ENCODE measurements at regions of chr6 and their contacts with region 1.

Region 1: DNA sequence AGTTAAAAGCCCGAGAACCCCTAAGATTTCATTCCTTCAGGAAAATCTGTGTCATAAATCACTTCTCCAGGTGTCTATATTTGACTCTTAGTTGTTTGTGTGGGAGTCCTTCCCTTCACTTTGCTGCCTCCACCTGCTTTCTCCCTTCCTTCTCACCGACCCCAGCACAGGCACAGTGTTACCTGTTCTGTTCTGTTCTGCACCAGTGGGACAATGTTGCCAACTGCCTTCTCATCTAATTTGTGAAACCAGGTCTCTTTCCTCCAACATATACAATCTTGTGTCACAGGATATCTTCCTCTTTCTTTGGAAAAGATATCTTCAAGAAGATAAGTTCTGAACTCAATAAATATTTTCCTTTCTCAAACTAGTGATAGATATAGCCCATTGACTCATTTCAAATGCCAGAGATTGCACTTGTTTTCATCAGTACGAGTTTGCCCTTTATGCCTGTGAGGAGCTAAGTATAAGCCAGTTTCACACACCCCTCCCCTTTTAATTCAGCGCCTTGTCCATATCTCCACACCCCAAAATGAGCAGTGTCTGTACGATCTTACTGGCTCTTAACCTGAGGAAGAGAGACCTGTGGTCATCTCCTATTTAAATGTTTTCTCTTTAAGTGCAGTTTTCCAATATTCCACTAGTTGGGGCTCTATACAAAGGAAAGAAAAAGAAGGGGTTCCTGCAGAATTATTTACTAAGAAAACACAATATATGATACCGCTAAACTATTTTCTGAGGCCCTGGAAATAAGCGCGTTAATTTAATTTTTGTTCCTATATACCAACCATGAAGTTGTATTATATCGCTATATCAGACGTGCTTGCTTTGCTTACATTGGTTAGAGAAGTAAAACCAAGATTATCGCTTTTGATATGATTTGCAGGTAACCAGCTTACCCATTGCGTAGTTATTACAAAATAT is 81.6 kb upstream of the PREP start:
- DNase-seq: no peak
- H3K4me3 ChIP-seq: no peak overlapping the region
- H3K27ac ChIP-seq: peak overlapping the region in 2 of 4 donors; percentile 12 to 20
- H3K4me1 ChIP-seq: peaks cover 0 to 36% (median 2%) of the 10 kb centered on the region in 4 donors
- H3K27me3 ChIP-seq: no peaks in the 10 kb centered on the region
- CTCF ChIP-seq: peak; percentile 82 to 96 (median 91)
- EP300 ChIP-seq: no peak
- POLR2A ChIP-seq: no peak

Region 2: GRCh38 chr6:105733565-105734162 is 249.2 kb after region 1 on chr6:
- in situ Hi-C with region 1: loop called in 2 of 4 experiments (anchors 25 kb)
- intact Hi-C with region 1: no loop called
- DNase-seq: no peak
- H3K4me3 ChIP-seq: no peak overlapping the region
- H3K27ac ChIP-seq: no peak overlapping the region
- H3K4me1 ChIP-seq: peaks cover 0 to 5% (median 0%) of the 10 kb centered on the region in 4 donors
- H3K27me3 ChIP-seq: no peaks in the 10 kb centered on the region
- CTCF ChIP-seq: peak; percentile 48 to 67 (median 56)
- EP300 ChIP-seq: no peak
- POLR2A ChIP-seq: no peak

Region 3: GRCh38 chr6:106069478-106069877 is 585.0 kb after region 1 on chr6:
- in situ Hi-C with region 1: loop called in 1 of 4 experiments (anchors 25 kb)
- intact Hi-C with region 1: no loop called
- DNase-seq: no peak
- H3K4me3 ChIP-seq: no peak overlapping the region
- H3K27ac ChIP-seq: no peak overlapping the region
- H3K4me1 ChIP-seq: peaks cover 0 to 5% (median 2%) of the 10 kb centered on the region in 4 donors
- H3K27me3 ChIP-seq: peaks cover 4% of the 10 kb centered on the region
- CTCF ChIP-seq: no peak
- EP300 ChIP-seq: no peak
- POLR2A ChIP-seq: no peak

Region 4: DNA sequence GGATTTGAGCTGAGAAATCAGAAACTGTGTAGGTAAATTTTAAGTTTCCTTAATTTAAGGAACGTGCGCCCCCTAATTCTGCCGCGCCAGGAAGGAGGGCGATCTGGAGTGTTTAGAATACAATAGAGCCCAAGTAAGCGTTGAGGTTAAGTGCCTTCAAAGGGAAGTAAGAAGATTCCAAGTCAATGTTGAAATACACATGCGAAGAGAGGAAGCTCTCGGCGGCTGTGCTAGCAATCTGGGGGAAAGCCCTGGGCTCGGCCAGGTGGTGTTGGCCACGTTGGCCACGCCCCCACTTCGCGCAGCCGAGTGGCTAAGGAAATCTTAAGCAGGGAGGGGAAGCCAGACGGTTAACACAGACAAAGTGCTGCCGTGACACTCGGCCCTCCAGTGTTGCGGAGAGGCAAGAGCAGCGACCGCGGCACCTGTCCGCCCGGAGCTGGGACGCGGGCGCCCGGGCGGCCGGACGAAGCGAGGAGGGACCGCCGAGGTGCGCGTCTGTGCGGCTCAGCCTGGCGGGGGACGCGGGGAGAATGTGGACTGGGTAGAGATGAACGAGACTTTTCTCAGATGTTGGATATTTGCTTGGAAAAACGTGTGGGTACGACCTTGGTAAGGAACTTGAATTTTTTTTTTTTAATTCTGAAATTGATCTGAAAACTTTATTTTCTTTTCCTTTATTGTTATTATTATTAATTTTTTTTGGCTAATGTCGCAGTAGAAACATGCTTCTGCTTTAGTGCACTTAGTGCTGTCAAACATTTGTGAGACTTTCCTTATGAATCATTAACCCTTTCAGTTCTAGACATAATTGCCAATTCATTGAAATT is 601.7 kb after region 1 on chr6 and contains the start of gene PRDM1:
- in situ Hi-C with region 1: loop called in 1 of 4 experiments (anchors 25 kb)
- intact Hi-C with region 1: no loop called
- DNase-seq: peak; percentile 95
- H3K4me3 ChIP-seq: peak within 1 kb of the TSS; percentile 6 to 67 (median 38)
- H3K27ac ChIP-seq: peak within 1 kb of the TSS; percentile 72 to 84 (median 78)
- H3K4me1 ChIP-seq: peaks cover 0 to 31% (median 8%) of the 10 kb centered on the region in 4 donors
- H3K27me3 ChIP-seq: peaks cover 34% of the 10 kb centered on the region
- CTCF ChIP-seq: peak in 4 of 5 experiments; percentile 17 to 66 (median 30)
- EP300 ChIP-seq: no peak
- POLR2A ChIP-seq: peak; percentile 84
- total RNA-seq, gene PRDM1: 2.4 to 32.4 (median 18.6) TPM

Region 5: DNA sequence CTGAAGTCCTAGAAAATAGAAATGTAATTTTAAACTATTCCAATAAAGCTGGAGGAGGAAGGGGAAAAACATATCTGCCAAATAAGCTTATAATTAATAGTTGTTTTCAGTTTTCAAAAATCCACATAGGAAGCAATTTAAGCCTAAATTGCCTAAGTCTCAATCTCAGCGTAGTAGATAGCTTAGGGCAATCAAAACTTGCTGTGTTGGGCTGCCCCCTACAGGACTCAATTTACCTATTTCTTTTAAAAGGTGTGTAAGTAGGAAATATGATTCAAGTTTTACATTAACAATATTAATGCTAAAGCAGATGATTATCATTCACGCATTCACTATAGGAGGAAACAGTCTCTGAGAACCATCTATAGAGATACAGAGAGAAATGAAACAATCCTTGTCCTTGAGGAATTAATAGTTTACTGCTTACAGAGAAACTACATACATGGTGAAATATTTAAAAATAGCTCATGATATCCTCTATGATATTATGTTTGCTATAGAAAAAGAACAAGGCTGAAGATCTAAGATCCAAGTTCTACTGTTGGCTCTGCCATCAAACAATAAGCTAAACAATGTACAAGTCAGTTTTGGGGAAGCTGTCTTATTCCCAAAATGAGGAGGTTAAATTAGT is 738.9 kb after region 1 on chr6:
- in situ Hi-C with region 1: loop called in 3 of 4 experiments (anchors 25 kb)
- intact Hi-C with region 1: no loop called
- DNase-seq: peak; percentile 77
- H3K4me3 ChIP-seq: no peak overlapping the region
- H3K27ac ChIP-seq: no peak overlapping the region
- H3K4me1 ChIP-seq: peaks cover 0 to 25% (median 14%) of the 10 kb centered on the region in 4 donors
- H3K27me3 ChIP-seq: no peaks in the 10 kb centered on the region
- CTCF ChIP-seq: peak; percentile 42 to 73 (median 63)
- EP300 ChIP-seq: no peak
- POLR2A ChIP-seq: no peak

Region 6: GRCh38 chr6:106244931-106245330 is 760.4 kb after region 1 on chr6:
- in situ Hi-C with region 1: loop called in 1 of 4 experiments (anchors 25 kb)
- intact Hi-C with region 1: no loop called
- DNase-seq: no peak
- H3K4me3 ChIP-seq: no peak overlapping the region
- H3K27ac ChIP-seq: no peak overlapping the region
- H3K4me1 ChIP-seq: peaks cover 0 to 3% (median 0%) of the 10 kb centered on the region in 4 donors
- H3K27me3 ChIP-seq: no peaks in the 10 kb centered on the region
- CTCF ChIP-seq: no peak
- EP300 ChIP-seq: no peak
- POLR2A ChIP-seq: no peak

Region 7: GRCh38 chr6:106275692-106276091 is 791.2 kb after region 1 on chr6:
- in situ Hi-C with region 1: loop called in 1 of 4 experiments (anchors 25 kb)
- intact Hi-C with region 1: no loop called
- DNase-seq: no peak
- H3K4me3 ChIP-seq: no peak overlapping the region
- H3K27ac ChIP-seq: peak overlapping the region in 1 of 4 donors; percentile 6
- H3K4me1 ChIP-seq: peaks cover 0 to 8% (median 3%) of the 10 kb centered on the region in 4 donors
- H3K27me3 ChIP-seq: no peaks in the 10 kb centered on the region
- CTCF ChIP-seq: no peak
- EP300 ChIP-seq: no peak
- POLR2A ChIP-seq: no peak

Measured in transverse colon (tissue), 4 donors.